Activated T-helper 2 cell treated with anti-CD3 and anti-CD28 coated beads, Interferon-gamma antibody, Interleukin-2, Interleukin-4, amounts not matched to agents 10 μg/mL and 5 μg/mL and 100 μg/mL, durations not matched to agents 14 hours and 24 hours and 36 hours (primary cell): ENCODE measurements at regions of chr1 and their contacts with region 1.

Region 1: DNA sequence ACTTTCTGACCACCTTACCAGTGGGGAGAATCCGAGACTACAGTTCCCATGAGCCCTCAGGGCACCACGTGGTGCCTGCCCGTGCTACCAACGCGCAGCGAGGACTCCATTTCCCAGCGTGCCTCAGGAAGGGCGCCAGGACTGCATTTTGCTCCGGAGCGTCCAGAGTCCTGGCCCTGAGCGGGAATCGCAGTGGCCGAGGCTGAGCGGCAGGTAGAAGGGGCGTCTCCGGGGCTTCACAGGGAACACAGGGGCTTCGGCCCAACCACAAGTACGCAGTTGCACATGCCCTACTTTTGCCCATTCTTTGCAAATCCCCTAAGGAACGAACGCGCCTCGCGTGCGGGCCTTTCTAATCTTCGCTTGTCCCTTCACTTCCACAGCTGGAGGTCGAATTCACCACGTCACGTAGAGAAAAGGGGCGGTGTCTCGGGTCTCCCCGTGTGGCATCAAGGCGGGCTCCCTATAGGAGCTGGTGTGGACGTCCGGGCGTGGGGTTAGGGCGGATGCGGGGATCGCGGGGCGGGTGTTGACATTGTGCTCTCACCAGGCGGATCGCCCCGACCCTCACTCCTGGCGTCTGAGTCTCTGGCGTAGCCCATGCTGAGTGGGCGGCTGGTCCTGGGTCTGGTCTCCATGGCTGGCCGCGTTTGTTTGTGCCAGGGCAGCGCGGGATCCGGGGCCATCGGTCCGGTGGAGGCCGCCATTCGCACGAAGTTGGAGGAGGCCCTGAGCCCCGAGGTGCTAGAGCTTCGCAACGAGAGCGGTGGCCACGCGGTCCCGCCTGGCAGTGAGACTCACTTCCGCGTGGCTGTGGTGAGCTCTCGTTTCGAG is at the start of gene BOLA1:
- DNase-seq: peak; percentile 76
- H3K4me3 Mint-ChIP-seq: peak within 1 kb of the TSS; percentile 84
- H3K27ac Mint-ChIP-seq: peak within 1 kb of the TSS; percentile 87
- H3K4me1 Mint-ChIP-seq: peaks cover 11% of the 10 kb centered on the region
- H3K27me3 Mint-ChIP-seq: no peaks in the 10 kb centered on the region
- total RNA-seq, gene BOLA1: 23.6 and 26.6 TPM in 2 replicates

Region 2: DNA sequence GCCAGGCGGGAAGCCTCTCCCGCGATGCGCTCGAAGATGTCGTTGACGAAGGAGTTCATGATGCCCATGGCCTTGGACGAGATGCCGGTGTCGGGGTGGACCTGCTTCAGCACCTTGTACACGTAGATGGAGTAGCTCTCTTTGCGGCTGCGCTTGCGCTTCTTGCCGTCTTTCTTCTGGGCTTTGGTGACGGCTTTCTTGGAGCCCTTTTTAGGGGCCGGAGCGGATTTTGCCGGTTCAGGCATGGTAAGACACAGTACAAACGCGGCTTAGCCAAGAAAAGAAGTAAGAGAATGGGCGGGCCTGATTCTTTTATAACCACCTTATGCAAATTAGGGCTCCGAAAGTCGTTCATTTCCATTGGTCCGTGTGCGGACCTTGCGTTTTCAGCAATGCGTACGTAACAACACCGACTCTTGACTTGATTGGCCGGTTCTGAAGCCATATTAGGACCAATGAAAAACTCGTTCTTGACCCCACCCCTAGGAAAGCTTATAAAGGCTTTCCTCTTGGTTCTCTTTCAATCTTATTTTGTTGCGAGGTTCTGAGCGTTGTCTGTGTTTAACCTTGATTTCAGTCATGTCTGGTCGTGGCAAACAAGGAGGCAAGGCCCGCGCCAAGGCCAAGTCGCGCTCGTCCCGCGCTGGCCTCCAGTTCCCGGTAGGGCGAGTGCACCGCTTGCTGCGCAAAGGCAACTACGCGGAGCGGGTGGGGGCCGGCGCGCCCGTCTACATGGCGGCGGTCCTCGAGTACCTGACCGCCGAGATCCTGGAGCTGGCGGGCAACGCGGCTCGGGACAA is 13.1 kb before region 1 on chr1:
- intact Hi-C with region 1: loop called (anchors 1 kb)
- DNase-seq: peak; percentile 90
- H3K4me3 Mint-ChIP-seq: no peak overlapping the region
- H3K27ac Mint-ChIP-seq: no peak overlapping the region
- H3K4me1 Mint-ChIP-seq: peaks cover 13% of the 10 kb centered on the region
- H3K27me3 Mint-ChIP-seq: no peaks in the 10 kb centered on the region

Region 3: GRCh38 chr1:149927503-149928387 is 28.1 kb after region 1 on chr1 and contains the start of gene SF3B4:
- intact Hi-C with region 1: loop called (anchors 1 kb)
- DNase-seq: peak; percentile 95
- H3K4me3 Mint-ChIP-seq: peak within 1 kb of the TSS; percentile 100
- H3K27ac Mint-ChIP-seq: peak within 1 kb of the TSS; percentile 95
- H3K4me1 Mint-ChIP-seq: peaks cover 41% of the 10 kb centered on the region
- H3K27me3 Mint-ChIP-seq: no peaks in the 10 kb centered on the region
- total RNA-seq, gene SF3B4: 109 and 113 TPM in 2 replicates

Region 4: DNA sequence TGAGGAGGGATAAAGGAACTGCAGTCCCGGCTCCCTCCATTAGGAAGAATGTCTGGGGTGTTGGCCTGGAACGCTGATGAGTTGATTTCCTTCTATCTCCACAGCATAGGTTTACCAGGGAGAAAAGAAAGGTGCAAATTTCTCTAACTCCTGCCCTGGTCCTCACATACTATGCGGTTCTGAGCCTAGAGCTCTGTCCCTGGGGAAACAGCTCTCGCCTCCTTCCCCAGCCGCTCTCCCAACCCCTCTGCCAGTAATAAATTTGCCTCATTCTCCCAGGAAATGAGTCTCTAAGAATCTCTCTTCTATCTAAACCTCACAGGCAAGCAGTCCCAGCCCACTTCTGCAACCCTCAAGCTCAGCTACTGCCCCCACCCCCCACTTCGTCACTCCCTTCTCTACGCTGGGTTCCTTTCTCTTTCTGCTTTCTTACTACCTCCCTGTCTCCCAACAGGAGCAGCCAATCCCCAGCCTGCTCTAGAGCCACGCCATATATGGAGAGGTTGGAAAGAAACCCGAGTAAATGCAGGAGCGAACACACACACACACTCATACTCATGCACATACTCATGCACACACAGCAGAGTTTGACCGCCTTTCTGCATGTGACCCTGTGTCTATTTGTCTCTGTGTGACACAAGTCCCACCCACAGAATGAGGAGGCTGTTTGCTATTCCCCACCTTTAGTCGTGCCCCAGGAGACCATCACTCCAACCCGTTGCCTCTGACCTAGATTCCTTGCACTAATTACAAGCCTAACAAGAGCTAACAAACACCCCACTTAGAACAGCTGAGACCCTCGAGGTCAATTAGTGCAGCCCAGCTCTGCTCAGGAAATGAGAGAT is 263.4 kb after region 1 on chr1:
- intact Hi-C with region 1: loop called (anchors 10 kb)
- DNase-seq: no peak
- H3K4me3 Mint-ChIP-seq: no peak overlapping the region
- H3K27ac Mint-ChIP-seq: no peak overlapping the region
- H3K4me1 Mint-ChIP-seq: peaks cover 45% of the 10 kb centered on the region
- H3K27me3 Mint-ChIP-seq: peaks cover 3% of the 10 kb centered on the region